ENCODE measurements at regions of chr2 and their contacts with region 1.

Region 1: DNA sequence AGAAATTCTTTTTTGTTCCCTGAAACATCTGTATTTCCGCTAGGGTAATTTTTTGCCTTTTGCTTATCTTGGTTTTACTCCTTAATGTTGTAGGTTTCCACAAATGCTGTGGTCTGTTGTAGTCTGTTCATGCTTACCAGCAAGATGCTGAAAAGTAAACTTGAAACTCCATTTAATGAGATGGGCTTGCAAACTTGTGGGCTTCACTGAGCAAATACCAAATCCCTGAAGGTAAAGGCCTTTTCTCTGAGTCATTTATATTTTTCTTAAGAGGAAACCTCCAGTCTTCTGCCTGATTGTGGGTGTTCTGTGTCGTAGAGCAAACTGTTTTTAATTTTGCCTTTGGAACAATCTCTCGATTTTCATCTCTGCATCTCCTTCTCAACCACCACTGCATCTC is 9.3 kb downstream of the SP140 start:
- DNase-seq: no peak
- H3K4me3 Mint-ChIP-seq: peak overlapping the region; percentile 23
- H3K27ac Mint-ChIP-seq: peak overlapping the region; percentile 83
- H3K4me1 Mint-ChIP-seq: peaks cover 55% of the 10 kb centered on the region
- H3K27me3 Mint-ChIP-seq: no peaks in the 10 kb centered on the region

Region 2: DNA sequence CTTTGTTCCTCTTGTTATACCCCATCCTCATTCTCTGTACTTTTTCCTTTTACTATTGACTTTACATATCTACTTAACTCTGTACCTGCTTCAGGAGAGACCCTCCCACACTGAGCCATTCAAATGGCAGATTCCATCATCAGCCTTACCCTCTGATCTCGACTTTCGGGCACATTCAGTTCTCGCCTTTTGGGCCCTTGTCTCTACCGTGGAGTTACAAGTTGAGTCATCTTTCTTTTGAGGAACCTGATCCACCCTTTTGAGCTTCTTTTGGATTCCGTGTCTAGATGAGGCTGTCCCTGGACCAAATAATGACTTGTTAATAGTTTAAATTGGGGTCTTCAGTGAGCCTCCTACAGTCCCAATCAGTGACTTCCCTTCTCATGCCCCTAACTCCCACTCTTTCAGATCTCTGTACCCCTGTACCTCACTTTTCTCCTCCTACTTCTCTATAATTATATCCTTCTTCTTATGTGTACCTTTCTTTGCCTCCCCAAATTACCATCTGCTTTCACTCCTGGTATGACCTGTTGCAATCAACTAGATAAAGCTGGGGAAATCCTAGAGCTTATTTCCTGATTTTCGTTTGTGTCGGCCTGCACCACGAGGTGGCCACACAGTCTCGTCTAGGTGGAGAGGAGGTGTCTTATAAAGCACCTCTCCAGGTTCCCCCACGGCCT is 32.3 kb before region 1 on chr2:
- CTCF ChIA-PET with region 1: no interaction called
- POLR2A ChIA-PET with region 1: interaction called, 3 read pairs
- intact Hi-C with region 1: loop called (anchors 1 kb)
- DNase-seq: peak; percentile 75
- H3K4me3 Mint-ChIP-seq: peak overlapping the region; percentile 10
- H3K27ac Mint-ChIP-seq: peak overlapping the region; percentile 80
- H3K4me1 Mint-ChIP-seq: peaks cover 35% of the 10 kb centered on the region
- H3K27me3 Mint-ChIP-seq: no peaks in the 10 kb centered on the region

Region 3: DNA sequence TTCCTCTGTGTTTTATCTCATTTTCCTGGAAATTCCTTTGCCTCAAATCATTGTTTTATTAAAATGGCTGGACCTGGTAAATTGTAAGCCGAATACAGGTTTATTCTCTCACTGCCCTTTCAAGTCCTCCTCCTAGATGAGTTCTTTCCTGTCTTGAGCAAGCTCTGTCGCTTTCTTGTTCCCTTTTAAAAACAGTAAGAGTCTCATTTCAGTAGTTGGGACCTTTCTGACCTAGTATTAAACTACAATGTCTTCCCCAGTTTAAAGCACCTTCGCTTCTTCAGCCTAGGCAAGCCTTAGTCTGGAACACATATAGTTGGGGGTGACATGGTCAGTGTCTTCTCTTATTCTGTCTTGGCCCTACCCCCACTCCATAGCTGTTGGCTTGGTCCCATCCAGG is 51.2 kb after region 1 on chr2:
- CTCF ChIA-PET with region 1: no interaction called
- POLR2A ChIA-PET with region 1: no interaction called
- intact Hi-C with region 1: loop called (anchors 2 kb)
- DNase-seq: no peak
- H3K4me3 Mint-ChIP-seq: no peak overlapping the region
- H3K27ac Mint-ChIP-seq: no peak overlapping the region
- H3K4me1 Mint-ChIP-seq: peaks cover 29% of the 10 kb centered on the region
- H3K27me3 Mint-ChIP-seq: no peaks in the 10 kb centered on the region

Measured in activated CD4-positive, alpha-beta memory T cell treated with anti-CD3 and anti-CD28 coated beads for 36 hours (primary cell).